Naive thymus-derived CD4-positive, alpha-beta T cell (primary cell): ENCODE measurements at regions of chr16 and their contacts with region 1.

Region 1: GRCh38 chr16:20900299-20901067 is at the starts of genes DCUN1D3 and LYRM1:
- DNase-seq: peak; percentile 65 to 90 (median 79)
- ATAC-seq: peak; percentile 80
- H3K4me3 ChIP-seq: peak within 1 kb of the TSS; percentile 88
- H3K4me3 Mint-ChIP-seq: peak within 1 kb of the TSS; percentile 87 to 99 (median 96)
- H3K27ac ChIP-seq: peak within 1 kb of the TSS; percentile 97
- H3K27ac Mint-ChIP-seq: peak within 1 kb of the TSS; percentile 94 to 99 (median 97)
- H3K4me1 ChIP-seq: peaks cover 23 to 29% of the 10 kb centered on the region in 2 donors
- H3K4me1 Mint-ChIP-seq: peaks cover 52 to 76% (median 71%) of the 10 kb centered on the region in 7 donors
- H3K27me3 ChIP-seq: no peaks in the 10 kb centered on the region
- H3K27me3 Mint-ChIP-seq: no peaks in the 10 kb centered on the region
- total RNA-seq, gene DCUN1D3: 4.0 to 15.7 (median 6.5) TPM
- total RNA-seq, gene LYRM1: 13.4 to 29.1 (median 20.0) TPM

Region 2: GRCh38 chr16:19067349-19068236 is 1832.9 kb before region 1 on chr16 and contains the start of gene COQ7:
- CTCF ChIA-PET with region 1: no interaction called
- POLR2A ChIA-PET with region 1: no interaction called
- intact Hi-C with region 1: loop called in 1 of 2 experiments (anchors 5 kb)
- DNase-seq: peak; percentile 95 to 100 (median 99)
- ATAC-seq: peak; percentile 92
- H3K4me3 ChIP-seq: peak within 1 kb of the TSS; percentile 73
- H3K4me3 Mint-ChIP-seq: peak within 1 kb of the TSS; percentile 86 to 97 (median 95)
- H3K27ac ChIP-seq: peak within 1 kb of the TSS; percentile 100
- H3K27ac Mint-ChIP-seq: peak within 1 kb of the TSS; percentile 88 to 100 (median 98)
- H3K4me1 ChIP-seq: peaks cover 5 to 10% of the 10 kb centered on the region in 2 donors
- H3K4me1 Mint-ChIP-seq: peaks cover 0 to 24% (median 15%) of the 10 kb centered on the region in 7 donors
- H3K27me3 ChIP-seq: no peaks in the 10 kb centered on the region
- H3K27me3 Mint-ChIP-seq: peaks cover 0 to 5% (median 0%) of the 10 kb centered on the region in 5 donors
- total RNA-seq, gene COQ7: 16.7 to 20.4 (median 17.5) TPM

Region 3: GRCh38 chr16:20763461-20764232 is 136.8 kb before region 1 on chr16 and contains the start of gene ACSM3:
- CTCF ChIA-PET with region 1: no interaction called
- POLR2A ChIA-PET with region 1: no interaction called
- intact Hi-C with region 1: loop called in 1 of 2 experiments (anchors 1 kb)
- DNase-seq: peak in 8 of 9 donors; percentile 51 to 84 (median 79)
- ATAC-seq: peak; percentile 99
- H3K4me3 ChIP-seq: peak within 1 kb of the TSS; percentile 72
- H3K4me3 Mint-ChIP-seq: peak within 1 kb of the TSS; percentile 80 to 97 (median 93)
- H3K27ac ChIP-seq: peak within 1 kb of the TSS; percentile 72
- H3K27ac Mint-ChIP-seq: peak within 1 kb of the TSS; percentile 90 to 96 (median 93)
- H3K4me1 ChIP-seq: peaks cover 4 to 13% of the 10 kb centered on the region in 2 donors
- H3K4me1 Mint-ChIP-seq: peaks cover 7 to 46% (median 31%) of the 10 kb centered on the region in 7 donors
- H3K27me3 ChIP-seq: no peaks in the 10 kb centered on the region
- H3K27me3 Mint-ChIP-seq: no peaks in the 10 kb centered on the region
- total RNA-seq, gene ACSM3: 3.0 to 10.9 (median 7.4) TPM

Region 4: GRCh38 chr16:20857281-20857680 is 43.2 kb before region 1 on chr16:
- CTCF ChIA-PET with region 1: no interaction called
- POLR2A ChIA-PET with region 1: no interaction called
- intact Hi-C with region 1: no loop called
- DNase-seq: no peak
- ATAC-seq: no peak
- H3K4me3 ChIP-seq: no peak overlapping the region
- H3K4me3 Mint-ChIP-seq: peak overlapping the region in 1 of 10 donors; percentile 18
- H3K27ac ChIP-seq: no peak overlapping the region
- H3K27ac Mint-ChIP-seq: peak overlapping the region in 2 of 9 donors; percentile 15 to 81
- H3K4me1 ChIP-seq: no peaks in the 10 kb centered on the region
- H3K4me1 Mint-ChIP-seq: peaks cover 0 to 23% (median 0%) of the 10 kb centered on the region in 7 donors
- H3K27me3 ChIP-seq: no peaks in the 10 kb centered on the region
- H3K27me3 Mint-ChIP-seq: no peaks in the 10 kb centered on the region

Region 5: DNA sequence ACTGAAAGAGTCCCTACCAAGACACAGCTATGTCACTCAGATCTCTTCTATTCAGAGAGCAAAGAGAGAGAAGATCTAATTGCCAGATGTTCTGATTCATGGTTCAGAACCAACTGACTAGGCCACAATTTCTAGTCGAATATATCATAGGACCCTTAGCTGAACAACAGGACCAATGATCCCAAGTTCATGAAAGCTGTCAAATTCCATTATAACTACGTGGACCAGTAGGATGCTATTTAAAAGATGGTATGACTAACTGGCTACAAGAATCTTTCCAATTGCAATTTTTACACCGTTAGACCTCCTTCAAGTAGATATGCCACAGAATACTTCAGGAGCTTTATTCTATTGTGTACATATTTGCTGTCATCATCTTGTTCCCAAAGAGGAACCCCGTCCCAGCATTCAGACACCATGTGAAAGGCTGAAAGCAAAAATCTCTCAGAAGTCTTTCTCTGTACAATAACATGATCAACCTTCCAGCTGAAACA is 26.3 kb before region 1 on chr16:
- CTCF ChIA-PET with region 1: interaction called, 3 read pairs
- POLR2A ChIA-PET with region 1: interaction called, 12 read pairs
- intact Hi-C with region 1: loop called (anchors 1 to 2 kb)
- DNase-seq: no peak
- ATAC-seq: no peak
- H3K4me3 ChIP-seq: peak overlapping the region; percentile 35
- H3K4me3 Mint-ChIP-seq: peak overlapping the region in 9 of 10 donors; percentile 67 to 85 (median 81)
- H3K27ac ChIP-seq: peak overlapping the region; percentile 62
- H3K27ac Mint-ChIP-seq: peak overlapping the region; percentile 37 to 99 (median 92)
- H3K4me1 ChIP-seq: peaks cover 18 to 27% of the 10 kb centered on the region in 2 donors
- H3K4me1 Mint-ChIP-seq: peaks cover 30 to 84% (median 40%) of the 10 kb centered on the region in 7 donors
- H3K27me3 ChIP-seq: no peaks in the 10 kb centered on the region
- H3K27me3 Mint-ChIP-seq: no peaks in the 10 kb centered on the region

Region 6: DNA sequence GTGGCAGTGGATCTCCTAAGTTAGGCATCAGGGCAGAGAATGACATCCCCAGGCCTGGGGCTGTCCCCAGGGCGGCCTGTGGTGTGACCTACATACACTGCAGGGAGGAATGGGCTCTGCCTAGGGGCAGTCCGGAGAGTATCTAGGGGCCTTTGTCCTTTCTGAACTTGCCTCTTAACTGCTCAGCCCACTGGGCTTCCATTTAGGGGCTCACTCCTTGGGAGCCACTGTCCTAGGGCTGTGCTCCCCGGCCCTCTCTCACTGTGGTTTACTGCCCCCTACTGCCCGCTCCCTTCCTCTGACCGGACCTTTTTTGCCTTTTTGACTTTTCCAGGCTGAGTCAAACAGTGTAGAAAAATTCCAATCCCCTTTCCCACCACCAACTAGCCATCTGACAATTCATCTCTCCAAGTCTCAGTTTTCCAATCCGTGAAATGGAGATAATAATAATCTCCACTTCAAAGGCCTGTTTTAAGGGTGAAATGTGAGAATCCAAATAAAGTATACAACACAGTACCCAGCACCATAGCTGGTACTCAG is 183.3 kb after region 1 on chr16:
- CTCF ChIA-PET with region 1: no interaction called
- POLR2A ChIA-PET with region 1: no interaction called
- intact Hi-C with region 1: loop called in 1 of 2 experiments (anchors 5 kb)
- DNase-seq: peak in 8 of 9 donors; percentile 12 to 60 (median 33)
- ATAC-seq: peak; percentile 78
- H3K4me3 ChIP-seq: no peak overlapping the region
- H3K4me3 Mint-ChIP-seq: no peak overlapping the region
- H3K27ac ChIP-seq: no peak overlapping the region
- H3K27ac Mint-ChIP-seq: no peak overlapping the region
- H3K4me1 ChIP-seq: no peaks in the 10 kb centered on the region
- H3K4me1 Mint-ChIP-seq: peaks cover 0 to 6% (median 0%) of the 10 kb centered on the region in 7 donors
- H3K27me3 ChIP-seq: no peaks in the 10 kb centered on the region
- H3K27me3 Mint-ChIP-seq: peaks cover 0 to 20% (median 0%) of the 10 kb centered on the region in 5 donors

Region 7: GRCh38 chr16:22297114-22297878 is 1396.8 kb after region 1 on chr16 and contains the start of gene POLR3E:
- CTCF ChIA-PET with region 1: no interaction called
- POLR2A ChIA-PET with region 1: no interaction called
- intact Hi-C with region 1: loop called in 1 of 2 experiments (anchors 2 kb)
- DNase-seq: peak; percentile 98 to 100 (median 100)
- ATAC-seq: peak; percentile 94
- H3K4me3 ChIP-seq: peak within 1 kb of the TSS; percentile 66
- H3K4me3 Mint-ChIP-seq: peak within 1 kb of the TSS; percentile 90 to 98 (median 95)
- H3K27ac ChIP-seq: peak within 1 kb of the TSS; percentile 99
- H3K27ac Mint-ChIP-seq: peak within 1 kb of the TSS; percentile 95 to 100 (median 99)
- H3K4me1 ChIP-seq: peaks cover 14 to 18% of the 10 kb centered on the region in 2 donors
- H3K4me1 Mint-ChIP-seq: peaks cover 27 to 49% (median 48%) of the 10 kb centered on the region in 7 donors
- H3K27me3 ChIP-seq: no peaks in the 10 kb centered on the region
- H3K27me3 Mint-ChIP-seq: peaks cover 0 to 8% (median 0%) of the 10 kb centered on the region in 5 donors
- total RNA-seq, gene POLR3E: 60.1 to 232 (median 112) TPM

Region 8: DNA sequence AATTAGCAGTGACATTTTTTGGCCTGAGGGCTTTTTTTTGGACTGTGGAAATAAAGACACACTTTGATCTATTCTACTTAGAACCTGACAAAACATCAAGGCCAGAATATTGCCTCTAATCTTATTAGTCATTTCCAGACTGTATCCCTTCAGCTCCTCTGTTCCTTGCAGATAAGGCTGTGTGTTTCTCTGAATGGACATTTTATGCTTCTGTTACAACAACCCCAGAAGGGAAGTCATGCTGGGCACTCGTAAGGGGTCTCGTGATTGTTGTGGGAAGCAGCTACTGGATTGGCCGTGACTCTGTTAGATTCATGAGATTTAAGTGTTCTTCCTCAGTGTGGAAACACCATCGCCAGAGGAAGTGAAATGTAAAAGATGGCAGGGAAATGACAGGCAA is 1881.8 kb after region 1 on chr16:
- CTCF ChIA-PET with region 1: no interaction called
- POLR2A ChIA-PET with region 1: no interaction called
- intact Hi-C with region 1: no loop called
- DNase-seq: no peak
- ATAC-seq: peak; percentile 24
- H3K4me3 ChIP-seq: no peak overlapping the region
- H3K4me3 Mint-ChIP-seq: no peak overlapping the region
- H3K27ac ChIP-seq: no peak overlapping the region
- H3K27ac Mint-ChIP-seq: no peak overlapping the region
- H3K4me1 ChIP-seq: no peaks in the 10 kb centered on the region
- H3K4me1 Mint-ChIP-seq: peaks cover 0 to 6% (median 0%) of the 10 kb centered on the region in 7 donors
- H3K27me3 ChIP-seq: no peaks in the 10 kb centered on the region
- H3K27me3 Mint-ChIP-seq: peaks cover 4 to 12% (median 9%) of the 10 kb centered on the region in 5 donors